ENCODE measurements at regions of chr14 and their contacts with region 1.

Region 1: GRCh38 chr14:59483900-59484638 is at the starts of genes JKAMP and L3HYPDH:
- DNase-seq: peak; percentile 95 to 98 (median 95)
- H3K4me3 ChIP-seq: peak within 1 kb of the TSS; percentile 70 to 98 (median 92)
- H3K27ac ChIP-seq: peak within 1 kb of the TSS; percentile 82 to 99 (median 96)
- H3K27me3 ChIP-seq: no peaks in the 10 kb centered on the region
- CTCF ChIP-seq: peak; percentile 39 to 84 (median 68)
- total RNA-seq, gene JKAMP: 25.5 to 66.0 (median 46.4) TPM
- total RNA-seq, gene L3HYPDH: 23.2 to 57.8 (median 38.6) TPM

Region 2: DNA sequence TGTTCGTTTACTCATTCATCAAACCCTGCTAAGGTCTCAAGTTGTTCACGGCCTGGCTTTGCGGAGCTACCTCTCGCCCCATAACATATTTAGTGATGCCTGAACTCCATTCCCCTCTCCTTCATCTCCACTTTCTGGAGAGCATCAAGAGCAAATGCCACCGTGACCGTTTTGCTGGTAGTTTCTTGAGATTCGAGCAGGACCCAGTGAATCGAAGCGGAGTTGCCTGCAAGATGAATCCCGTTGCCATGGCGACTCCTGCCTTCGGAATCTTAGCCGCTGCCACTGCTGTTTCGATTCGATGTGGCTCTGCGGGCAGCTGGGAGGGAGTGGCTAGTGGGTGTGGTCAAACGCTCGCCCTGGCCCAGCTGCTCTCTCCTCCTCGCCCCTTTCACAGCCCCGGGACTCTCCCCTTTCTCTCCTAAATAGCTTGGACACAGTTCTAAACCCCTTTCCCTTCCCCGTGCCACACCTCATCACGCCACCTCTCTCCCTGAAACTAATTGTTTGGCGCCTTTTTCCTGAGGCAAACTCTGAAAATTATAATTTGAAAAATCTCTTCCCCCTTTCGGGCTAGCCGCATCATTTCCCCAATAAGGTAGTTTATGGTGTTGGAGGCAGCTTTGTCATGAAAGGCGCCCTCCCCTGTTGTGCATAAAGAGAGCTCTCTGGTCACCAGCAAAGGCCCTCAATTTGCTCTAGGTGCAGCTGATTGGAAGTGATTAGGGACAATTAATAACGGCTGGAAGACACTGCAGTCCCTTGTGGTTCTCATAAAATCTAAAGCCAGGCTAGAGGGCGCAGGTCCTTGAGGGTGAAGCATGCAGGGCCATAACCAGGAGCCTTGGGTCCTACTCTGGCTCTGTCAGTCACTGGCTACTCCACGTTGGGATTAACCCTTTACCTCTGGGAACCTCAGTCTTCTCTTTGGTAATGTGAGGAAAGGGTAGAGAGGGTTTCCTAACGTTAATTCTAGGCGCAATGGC is 294.0 kb before region 1 on chr14:
- intact Hi-C with region 1: loop called in 1 of 2 experiments (anchors 5 kb)
- DNase-seq: peak; percentile 49 to 89 (median 77)
- H3K4me3 ChIP-seq: peak overlapping the region; percentile 67 to 99 (median 93)
- H3K27ac ChIP-seq: peak overlapping the region in 54 of 59 donors; percentile 73 to 96 (median 88)
- H3K27me3 ChIP-seq: no peaks in the 10 kb centered on the region
- CTCF ChIP-seq: peak in 2 of 56 donors; percentile 12 to 15

Region 3: GRCh38 chr14:59576332-59577294 is 92.5 kb after region 1 on chr14 and contains the start of gene CCDC175:
- intact Hi-C with region 1: loop called in 1 of 2 experiments (anchors 10 kb)
- DNase-seq: peak; percentile 82 to 95 (median 86)
- H3K4me3 ChIP-seq: peak within 1 kb of the TSS; percentile 26 to 84 (median 65)
- H3K27ac ChIP-seq: peak within 1 kb of the TSS in 12 of 59 donors; percentile 2 to 77 (median 48)
- H3K27me3 ChIP-seq: no peaks in the 10 kb centered on the region
- CTCF ChIP-seq: peak; percentile 54 to 88 (median 78)
- total RNA-seq, gene CCDC175: 0.84 to 8.3 (median 3.7) TPM

Region 4: GRCh38 chr14:60079724-60080123 is 595.7 kb after region 1 on chr14:
- intact Hi-C with region 1: no loop called
- DNase-seq: no peak
- H3K4me3 ChIP-seq: no peak overlapping the region
- H3K27ac ChIP-seq: no peak overlapping the region
- H3K27me3 ChIP-seq: no peaks in the 10 kb centered on the region
- CTCF ChIP-seq: no peak

Region 5: GRCh38 chr14:60151715-60152114 is 667.6 kb after region 1 on chr14:
- intact Hi-C with region 1: loop called in 1 of 2 experiments (anchors 10 kb)
- DNase-seq: peak; percentile 44 to 86 (median 76)
- H3K4me3 ChIP-seq: peak overlapping the region in 1 of 59 donors; percentile 1
- H3K27ac ChIP-seq: peak overlapping the region in 56 of 59 donors; percentile 18 to 84 (median 66)
- H3K27me3 ChIP-seq: no peaks in the 10 kb centered on the region
- CTCF ChIP-seq: peak in 2 of 56 donors; percentile 7 to 17

Region 6: DNA sequence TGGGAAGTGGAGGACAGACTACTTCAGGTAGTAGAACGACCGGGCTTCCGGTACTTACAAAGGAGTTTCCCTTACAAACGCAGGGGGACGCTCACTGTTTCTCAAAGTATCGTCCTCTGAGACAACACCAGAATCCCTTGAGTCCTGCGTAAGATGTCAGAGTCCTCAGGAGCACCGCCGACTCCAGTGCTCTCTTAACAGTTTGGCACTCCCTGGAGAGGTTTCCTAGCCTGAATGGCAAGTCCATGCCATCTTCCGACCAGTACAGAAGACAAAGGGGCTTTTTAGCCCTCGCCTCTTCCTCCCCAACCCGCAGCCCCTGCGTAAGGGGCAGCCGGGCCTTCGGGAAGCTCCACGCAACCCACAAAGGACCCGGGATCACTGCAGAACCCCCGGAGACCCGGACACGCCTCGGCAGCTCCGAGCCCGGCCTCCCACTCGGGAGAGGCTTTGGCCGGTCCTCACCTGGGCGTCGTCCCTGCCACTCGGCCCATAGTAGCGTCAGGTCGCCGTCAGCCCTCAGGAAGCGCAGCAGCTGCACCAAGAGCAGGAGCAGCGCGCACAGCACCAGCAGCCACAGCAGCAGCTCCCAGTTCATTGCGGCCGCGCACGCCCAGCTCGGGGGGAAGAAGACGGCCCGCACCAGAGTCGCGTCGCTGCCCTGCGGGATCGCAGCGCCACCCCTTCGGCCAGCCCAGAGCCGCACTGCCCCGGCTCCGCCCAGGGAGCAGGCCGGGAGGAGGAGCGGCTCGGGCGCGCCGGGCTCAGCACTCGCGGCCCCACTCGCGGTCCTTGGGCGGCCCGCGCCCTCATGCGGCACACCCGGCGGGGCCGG is 680.9 kb after region 1 on chr14 and contains the start of gene DHRS7:
- intact Hi-C with region 1: loop called in 1 of 2 experiments (anchors 10 kb)
- DNase-seq: peak; percentile 72 to 89 (median 82)
- H3K4me3 ChIP-seq: peak within 1 kb of the TSS; percentile 62 to 99 (median 88)
- H3K27ac ChIP-seq: peak within 1 kb of the TSS; percentile 81 to 99 (median 95)
- H3K27me3 ChIP-seq: no peaks in the 10 kb centered on the region
- CTCF ChIP-seq: peak in 54 of 56 donors; percentile 7 to 92 (median 69)
- total RNA-seq, gene DHRS7: 37.5 to 72.7 (median 57.7) TPM